ENCODE measurements at regions of chr12 and their contacts with region 1.

Region 1: DNA sequence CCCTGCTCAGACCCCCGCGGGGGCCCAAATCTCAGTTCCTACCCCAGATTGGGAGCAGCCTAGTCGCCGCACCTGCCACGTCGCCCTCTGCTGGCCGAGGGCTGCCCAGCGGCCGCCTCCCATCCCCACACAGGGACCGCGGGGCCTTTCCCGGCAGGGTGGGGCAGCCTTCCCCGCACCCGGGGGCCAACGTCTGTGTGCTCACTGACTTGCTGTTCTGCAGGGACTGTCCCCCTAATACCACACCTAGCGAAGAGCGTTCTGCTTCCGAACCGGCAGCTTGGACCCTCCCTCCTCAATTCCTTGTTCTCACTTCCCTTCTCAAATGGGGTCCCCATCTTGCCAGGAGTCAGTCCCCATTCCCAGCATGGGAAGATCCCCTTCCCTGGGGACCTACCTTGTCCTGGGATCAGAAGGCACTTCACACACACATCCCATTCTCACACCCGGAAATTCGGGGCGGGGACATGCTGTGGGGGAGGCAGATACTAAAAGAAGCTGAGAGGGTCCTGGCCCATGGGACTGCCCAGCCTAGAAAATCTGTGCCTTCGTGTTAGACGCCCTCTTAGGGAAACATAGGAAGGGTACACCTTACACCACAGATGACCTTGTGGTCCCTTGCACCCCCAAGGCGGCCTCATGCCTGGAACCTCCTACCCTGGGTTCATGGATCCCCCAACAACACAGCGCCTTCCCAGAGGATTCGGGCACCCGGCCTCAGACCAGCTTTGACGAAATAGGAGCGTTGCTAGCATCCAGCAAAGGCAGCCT is 16.4 kb downstream of the ACVRL1 start:
- DNase-seq: peak; percentile 20 to 45 (median 42)
- H3K4me3 ChIP-seq: peak overlapping the region in 3 of 7 experiments; percentile 26 to 58 (median 42)
- H3K27ac ChIP-seq: no peak overlapping the region
- H3K4me1 ChIP-seq: peaks cover 10 to 29% (median 29%) of the 10 kb centered on the region in 4 experiments
- H3K27me3 ChIP-seq: no peaks in the 10 kb centered on the region

Region 2: GRCh38 chr12:51601241-51601640 is 322.4 kb before region 1 on chr12:
- CTCF ChIA-PET with region 1: no interaction called
- POLR2A ChIA-PET with region 1: no interaction called
- DNase-seq: no peak
- H3K4me3 ChIP-seq: no peak overlapping the region
- H3K27ac ChIP-seq: no peak overlapping the region
- H3K4me1 ChIP-seq: no peaks in the 10 kb centered on the region
- H3K27me3 ChIP-seq: peaks cover 0 to 6% (median 4%) of the 10 kb centered on the region in 5 experiments

Region 3: DNA sequence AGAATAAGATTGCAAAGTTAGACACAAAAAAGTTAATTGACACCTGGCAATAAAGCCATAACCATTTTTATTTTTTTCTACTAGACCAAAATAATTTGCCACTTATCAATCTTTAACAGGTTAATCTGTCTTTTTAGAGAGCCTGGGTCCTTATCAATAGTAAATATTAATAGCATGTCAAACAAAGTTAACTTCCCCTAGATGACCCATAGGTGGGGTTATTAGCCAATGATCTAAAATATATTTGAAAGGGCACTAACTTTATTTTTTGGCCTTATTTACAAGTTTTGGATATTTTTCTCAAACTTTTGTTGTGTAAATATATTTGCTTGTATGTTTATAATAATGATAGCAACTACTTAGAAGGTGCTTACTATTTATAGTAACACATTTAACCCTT is 31.8 kb before region 1 on chr12:
- CTCF ChIA-PET with region 1: interaction called, 77 read pairs
- POLR2A ChIA-PET with region 1: interaction called, 3 read pairs
- DNase-seq: peak in 1 of 3 donors; percentile 15
- H3K4me3 ChIP-seq: no peak overlapping the region
- H3K27ac ChIP-seq: no peak overlapping the region
- H3K4me1 ChIP-seq: peaks cover 0 to 6% (median 3%) of the 10 kb centered on the region in 4 experiments
- H3K27me3 ChIP-seq: no peaks in the 10 kb centered on the region

Region 4: GRCh38 chr12:51905471-51906429 is 17.9 kb before region 1 on chr12:
- CTCF ChIA-PET with region 1: interaction called, 63 read pairs
- POLR2A ChIA-PET with region 1: no interaction called
- DNase-seq: peak in 2 of 3 donors; percentile 25 to 42
- H3K4me3 ChIP-seq: no peak overlapping the region
- H3K27ac ChIP-seq: peak overlapping the region in 1 of 2 experiments; percentile 59
- H3K4me1 ChIP-seq: peaks cover under 1 to 17% (median 13%) of the 10 kb centered on the region in 4 experiments
- H3K27me3 ChIP-seq: peaks cover 0 to 33% (median 6%) of the 10 kb centered on the region in 5 experiments

Region 5: DNA sequence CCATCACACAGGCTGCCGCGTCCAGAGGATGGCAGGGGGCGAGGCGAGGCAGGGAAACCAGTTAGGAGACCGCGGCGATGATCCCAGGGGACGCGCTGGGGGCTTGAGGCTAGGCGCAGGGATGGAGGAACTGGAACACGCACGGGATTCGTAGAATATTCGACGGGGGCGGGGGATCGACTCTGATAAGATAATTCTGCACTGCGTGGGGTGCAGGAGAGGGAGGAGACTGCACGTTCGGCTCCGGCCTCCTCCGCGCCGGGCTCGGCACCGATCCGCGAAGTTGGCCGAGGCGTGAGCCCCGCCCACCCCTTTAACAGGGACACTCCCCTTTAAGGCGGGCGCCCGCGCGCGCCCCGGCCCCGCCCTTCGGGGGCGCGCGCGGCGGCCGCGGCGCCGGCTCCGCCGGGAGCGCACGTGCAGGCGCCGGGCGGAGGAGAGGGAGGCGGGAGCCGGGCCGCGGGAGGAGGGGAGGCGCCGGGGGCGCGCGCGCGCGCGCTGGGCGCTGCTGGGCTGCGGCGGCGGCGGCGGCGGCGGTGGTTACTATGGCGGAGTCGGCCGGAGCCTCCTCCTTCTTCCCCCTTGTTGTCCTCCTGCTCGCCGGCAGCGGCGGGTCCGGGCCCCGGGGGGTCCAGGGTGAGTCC is 27.6 kb after region 1 on chr12 and contains the start of gene ACVR1B:
- CTCF ChIA-PET with region 1: interaction called, 37 read pairs
- POLR2A ChIA-PET with region 1: no interaction called
- DNase-seq: peak; percentile 83 to 93 (median 91)
- H3K4me3 ChIP-seq: peak within 1 kb of the TSS; percentile 61 to 90 (median 83)
- H3K27ac ChIP-seq: peak within 1 kb of the TSS; percentile 20 to 72
- H3K4me1 ChIP-seq: peaks cover 19 to 44% (median 33%) of the 10 kb centered on the region in 4 experiments
- H3K27me3 ChIP-seq: peaks cover 0 to 7% (median 3%) of the 10 kb centered on the region in 5 experiments

Region 6: GRCh38 chr12:51980051-51980808 is 56.5 kb after region 1 on chr12:
- CTCF ChIA-PET with region 1: interaction called, 59 read pairs
- POLR2A ChIA-PET with region 1: no interaction called
- DNase-seq: peak; percentile 67 to 84 (median 80)
- H3K4me3 ChIP-seq: no peak overlapping the region
- H3K27ac ChIP-seq: no peak overlapping the region
- H3K4me1 ChIP-seq: peaks cover 3 to 29% (median 7%) of the 10 kb centered on the region in 4 experiments
- H3K27me3 ChIP-seq: no peaks in the 10 kb centered on the region

Region 7: GRCh38 chr12:52452101-52452500 is 528.4 kb after region 1 on chr12 and contains the start of gene KRT6B:
- CTCF ChIA-PET with region 1: no interaction called
- POLR2A ChIA-PET with region 1: no interaction called
- DNase-seq: no peak
- H3K4me3 ChIP-seq: no peak within 1 kb of the TSS
- H3K27ac ChIP-seq: no peak within 1 kb of the TSS
- H3K4me1 ChIP-seq: no peaks in the 10 kb centered on the region
- H3K27me3 ChIP-seq: peaks cover 0 to 4% (median 3%) of the 10 kb centered on the region in 5 experiments